Naive thymus-derived CD4-positive, alpha-beta T cell (primary cell): ENCODE measurements at regions of chr5 and their contacts with region 1.

Region 1: GRCh38 chr5:65867542-65868200 is 58.7 kb upstream of the ERBIN start:
- DNase-seq: peak in 6 of 9 donors; percentile 5 to 27 (median 12)
- ATAC-seq: no peak
- H3K4me3 ChIP-seq: peak overlapping the region; percentile 27
- H3K4me3 Mint-ChIP-seq: peak overlapping the region; percentile 61 to 84 (median 78)
- H3K27ac ChIP-seq: peak overlapping the region; percentile 69
- H3K27ac Mint-ChIP-seq: peak overlapping the region in 8 of 9 donors; percentile 82 to 99 (median 93)
- H3K4me1 ChIP-seq: peaks cover 0 to 16% of the 10 kb centered on the region in 2 donors
- H3K4me1 Mint-ChIP-seq: peaks cover 16 to 49% (median 30%) of the 10 kb centered on the region in 7 donors
- H3K27me3 ChIP-seq: no peaks in the 10 kb centered on the region
- H3K27me3 Mint-ChIP-seq: no peaks in the 10 kb centered on the region

Region 2: GRCh38 chr5:65830856-65831255 is 36.8 kb before region 1 on chr5:
- CTCF ChIA-PET with region 1: no interaction called
- POLR2A ChIA-PET with region 1: interaction called, 4 read pairs
- intact Hi-C with region 1: loop called in 1 of 2 experiments (anchors 5 kb)
- DNase-seq: no peak
- ATAC-seq: no peak
- H3K4me3 ChIP-seq: no peak overlapping the region
- H3K4me3 Mint-ChIP-seq: no peak overlapping the region
- H3K27ac ChIP-seq: no peak overlapping the region
- H3K27ac Mint-ChIP-seq: no peak overlapping the region
- H3K4me1 ChIP-seq: no peaks in the 10 kb centered on the region
- H3K4me1 Mint-ChIP-seq: peaks cover 0 to 7% (median 3%) of the 10 kb centered on the region in 7 donors
- H3K27me3 ChIP-seq: no peaks in the 10 kb centered on the region
- H3K27me3 Mint-ChIP-seq: peaks cover 0 to 2% (median 0%) of the 10 kb centered on the region in 5 donors

Region 3: DNA sequence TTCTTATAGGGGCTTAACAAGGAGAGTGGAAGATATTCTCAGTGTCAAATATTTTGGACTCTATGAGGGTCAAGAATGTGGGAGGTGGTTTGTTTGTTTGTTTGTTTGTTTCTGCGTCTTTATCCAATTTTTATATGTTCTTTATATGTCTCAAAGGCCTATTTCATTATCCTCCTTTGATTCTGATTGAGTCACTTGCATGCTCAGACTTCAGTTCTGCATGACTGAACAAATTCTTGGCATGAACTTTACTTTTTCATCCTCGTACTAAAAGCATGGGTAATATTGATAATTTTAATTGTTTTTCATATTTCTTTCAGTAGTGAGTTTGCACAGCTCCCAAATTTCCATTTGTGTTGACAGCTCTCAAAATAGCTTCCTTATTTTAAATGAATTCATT is 39.5 kb after region 1 on chr5:
- CTCF ChIA-PET with region 1: no interaction called
- POLR2A ChIA-PET with region 1: no interaction called
- intact Hi-C with region 1: loop called in 1 of 2 experiments (anchors 5 kb)
- DNase-seq: no peak
- ATAC-seq: no peak
- H3K4me3 ChIP-seq: no peak overlapping the region
- H3K4me3 Mint-ChIP-seq: no peak overlapping the region
- H3K27ac ChIP-seq: no peak overlapping the region
- H3K27ac Mint-ChIP-seq: no peak overlapping the region
- H3K4me1 ChIP-seq: no peaks in the 10 kb centered on the region
- H3K4me1 Mint-ChIP-seq: no peaks in the 10 kb centered on the region
- H3K27me3 ChIP-seq: no peaks in the 10 kb centered on the region
- H3K27me3 Mint-ChIP-seq: no peaks in the 10 kb centered on the region